GM13977 (cell line): ENCODE measurements at regions of chr3 and their contacts with region 1.

Region 1: DNA sequence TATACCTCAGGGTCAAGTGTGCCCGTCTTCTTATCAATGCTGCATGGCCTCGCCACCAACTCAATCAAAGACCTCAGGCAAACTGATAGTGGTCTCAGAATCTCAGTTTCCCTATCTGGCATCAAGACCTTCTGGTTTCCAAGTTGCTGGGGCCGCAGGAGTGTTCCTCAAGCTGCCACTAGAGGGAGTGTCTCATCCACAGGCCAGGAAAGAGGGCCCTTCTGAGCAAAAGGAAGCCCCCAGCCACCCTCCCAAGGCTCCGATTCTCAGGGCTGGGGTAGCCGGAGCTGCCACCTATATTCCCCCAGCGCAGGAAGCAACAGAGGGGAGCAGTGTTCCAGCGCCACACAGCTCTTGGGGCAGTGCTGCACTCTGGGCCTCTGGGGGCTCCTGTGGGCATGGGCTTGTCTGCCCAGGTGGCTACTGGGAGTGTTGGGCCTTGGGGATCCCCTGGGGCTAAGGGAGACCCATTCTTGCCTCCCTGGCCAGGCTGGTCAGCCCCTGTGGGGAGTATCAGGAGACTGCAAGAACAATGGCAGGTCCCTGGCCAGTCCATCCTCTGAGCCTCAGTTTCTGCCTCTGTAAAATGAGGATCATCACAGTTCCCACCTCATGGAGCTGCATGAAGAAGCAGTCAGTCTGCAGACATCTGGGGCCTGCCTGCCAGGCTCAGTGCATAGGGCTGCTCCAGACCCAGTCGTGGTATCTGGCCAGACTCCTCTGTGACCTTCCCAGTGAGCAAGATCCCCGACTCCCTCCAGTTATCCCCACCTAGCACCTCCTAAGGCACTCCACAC is 23.4 kb upstream of the SEC13 start:
- DNase-seq: peak; percentile 85
- CTCF ChIP-seq: peak; percentile 89

Region 2: DNA sequence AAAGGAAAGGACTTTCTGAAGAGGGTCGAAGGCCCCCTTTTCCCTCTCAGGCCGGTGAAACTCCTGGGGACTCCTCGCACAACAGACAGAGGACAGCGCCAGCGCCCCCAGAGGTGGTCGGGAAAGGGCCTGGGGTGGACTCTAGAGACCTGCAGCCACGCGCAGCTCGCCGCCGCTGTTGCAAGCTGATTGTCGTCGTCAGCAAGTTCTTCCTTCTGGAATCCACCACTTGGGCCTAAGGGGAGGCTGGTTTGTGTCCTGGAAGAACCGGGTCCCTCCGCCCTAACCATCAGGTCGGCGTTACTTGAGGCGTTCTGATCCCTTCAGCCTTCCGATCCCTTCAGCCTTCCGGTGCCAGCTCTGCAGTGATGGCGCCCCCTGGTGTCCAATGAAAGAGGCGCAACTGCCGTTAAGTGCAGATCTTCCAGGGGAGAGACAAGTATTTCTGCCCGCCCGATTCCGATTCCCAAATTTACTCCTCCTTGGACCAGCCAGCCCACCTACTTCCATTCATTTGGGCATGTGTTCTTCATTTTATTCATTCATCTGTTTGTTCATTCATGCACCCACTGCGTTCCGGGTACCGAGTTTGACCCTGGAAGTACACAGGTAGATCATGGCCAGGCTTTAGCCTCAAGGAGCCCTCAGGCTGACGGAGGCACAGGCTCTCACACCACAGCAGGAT is 394.5 kb after region 1 on chr3:
- in situ Hi-C with region 1: loop called (anchors 25 kb)
- DNase-seq: peak; percentile 65
- CTCF ChIP-seq: peak; percentile 72

Region 3: DNA sequence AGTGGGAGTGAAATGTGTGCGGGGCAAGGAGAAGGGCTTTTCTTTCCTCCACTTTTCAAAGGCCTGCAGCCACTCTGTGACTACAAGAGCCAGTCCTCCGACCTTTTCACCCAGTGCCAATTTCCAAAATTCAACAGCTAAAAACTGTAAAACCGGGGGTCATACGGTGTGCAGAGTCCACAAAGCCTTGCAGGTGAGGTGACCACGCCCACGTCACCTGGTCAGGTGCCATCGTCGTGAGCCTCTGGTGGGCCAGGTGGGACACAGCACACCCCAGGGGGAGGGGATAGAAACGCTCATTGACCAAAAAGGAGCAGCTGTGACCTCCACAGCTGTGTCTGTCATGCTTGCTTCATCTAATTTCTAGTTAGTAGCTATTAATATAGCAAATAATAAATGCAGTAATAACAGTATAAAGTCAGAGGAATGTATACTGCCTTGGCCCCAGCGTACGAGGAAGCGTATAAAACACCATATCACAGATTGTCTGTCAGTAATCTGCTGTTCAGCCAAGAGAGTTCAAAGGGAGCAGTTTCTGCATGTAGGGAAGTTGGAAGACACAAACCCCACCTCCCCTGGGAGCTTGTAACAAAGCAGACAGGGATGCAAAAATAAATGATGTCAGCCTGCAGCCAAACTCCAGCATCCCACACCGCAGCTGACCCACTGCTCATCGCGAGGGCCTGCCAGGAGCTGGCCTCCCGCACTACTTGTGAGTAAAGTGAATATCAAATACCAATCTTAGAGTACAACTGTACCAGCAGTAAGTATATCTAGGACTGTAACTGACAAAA is 1212.7 kb after region 1 on chr3:
- in situ Hi-C with region 1: no loop called
- DNase-seq: no peak
- CTCF ChIP-seq: no peak